Heart left ventricle (tissue), 16 donors: ENCODE measurements at regions of chr5 and their contacts with region 1.

Region 1: DNA sequence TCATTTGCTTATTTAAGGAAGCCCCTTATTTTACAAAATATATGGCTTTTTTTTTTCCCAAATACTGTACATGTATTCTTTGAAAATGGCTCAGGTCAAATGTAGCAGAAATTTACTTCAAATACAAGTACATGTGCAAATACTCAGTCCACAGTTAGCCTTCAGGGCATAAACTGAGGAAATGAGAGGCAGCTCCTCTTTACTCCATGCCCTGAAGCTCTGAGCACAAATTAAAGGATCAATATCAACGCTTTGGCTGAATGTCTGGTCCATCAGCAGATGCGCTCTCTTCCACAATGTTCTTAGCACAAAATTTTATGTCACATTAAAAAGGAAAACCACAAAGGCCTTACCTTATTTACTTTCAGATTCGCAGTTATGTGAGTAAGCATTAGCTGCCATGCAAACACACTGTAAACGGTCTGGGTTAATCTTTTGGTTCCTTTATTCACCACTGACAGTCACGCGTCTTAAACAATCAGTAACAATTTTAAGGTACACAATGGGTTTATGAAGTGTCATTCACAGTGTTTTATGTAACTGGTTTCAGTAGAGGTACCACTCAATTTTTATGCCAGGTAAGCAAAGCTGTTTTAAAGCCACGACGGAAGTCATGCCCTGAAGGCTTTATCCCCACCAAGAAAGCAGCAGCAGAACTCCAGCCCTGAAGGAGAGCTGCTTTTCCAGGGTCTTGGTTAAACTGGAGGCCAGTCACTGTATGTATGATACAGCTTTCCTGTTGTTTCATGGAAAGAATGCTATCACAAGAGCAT is 103.4 kb downstream of the OTULIN start:
- DNase-seq: no peak
- ATAC-seq: peak in 1 of 4 donors; percentile 28
- H3K4me3 ChIP-seq: no peak overlapping the region
- H3K27ac ChIP-seq: peak overlapping the region in 3 of 12 donors; percentile 6 to 39 (median 16)
- H3K4me1 ChIP-seq: peaks cover 0 to 25% (median 6%) of the 10 kb centered on the region in 12 donors
- H3K27me3 ChIP-seq: no peaks in the 10 kb centered on the region
- CTCF ChIP-seq: no peak
- POLR2A ChIP-seq: no peak

Region 2: DNA sequence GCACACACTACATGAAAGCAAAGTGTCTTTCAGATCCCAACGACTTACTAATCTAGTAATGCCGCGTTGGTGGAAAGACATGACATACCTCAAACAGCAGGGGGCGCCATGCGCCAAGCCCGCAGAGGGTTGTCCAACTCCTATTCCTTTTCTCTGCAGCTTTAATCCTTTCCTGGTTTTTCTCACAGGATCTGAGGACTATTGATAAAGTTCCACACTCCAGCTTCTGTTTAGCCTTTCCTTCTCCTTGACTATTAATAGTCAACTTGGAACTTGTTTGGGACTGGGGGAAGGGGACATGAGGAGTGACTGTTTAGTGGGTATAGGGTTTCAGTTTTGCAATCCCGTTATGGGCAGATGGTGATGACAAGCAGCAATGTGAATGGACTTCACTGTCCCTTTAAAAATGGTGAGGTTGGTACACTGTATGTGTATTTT is 40.5 kb before region 1 on chr5:
- intact Hi-C with region 1: no loop called
- DNase-seq: peak; percentile 79 to 90 (median 79)
- ATAC-seq: peak; percentile 60 to 78 (median 68)
- H3K4me3 ChIP-seq: no peak overlapping the region
- H3K27ac ChIP-seq: peak overlapping the region in 6 of 12 donors; percentile 8 to 65 (median 34)
- H3K4me1 ChIP-seq: peaks cover 0 to 41% (median 25%) of the 10 kb centered on the region in 12 donors
- H3K27me3 ChIP-seq: no peaks in the 10 kb centered on the region
- CTCF ChIP-seq: peak; percentile 90 to 99 (median 96)
- POLR2A ChIP-seq: no peak

Region 3: GRCh38 chr5:14801792-14802191 is 33.9 kb after region 1 on chr5:
- intact Hi-C with region 1: loop called in 1 of 10 experiments (anchors 5 kb)
- DNase-seq: no peak
- ATAC-seq: no peak
- H3K4me3 ChIP-seq: no peak overlapping the region
- H3K27ac ChIP-seq: no peak overlapping the region
- H3K4me1 ChIP-seq: peaks cover 3 to 33% (median 17%) of the 10 kb centered on the region in 12 donors
- H3K27me3 ChIP-seq: no peaks in the 10 kb centered on the region
- CTCF ChIP-seq: no peak
- POLR2A ChIP-seq: no peak

Region 4: DNA sequence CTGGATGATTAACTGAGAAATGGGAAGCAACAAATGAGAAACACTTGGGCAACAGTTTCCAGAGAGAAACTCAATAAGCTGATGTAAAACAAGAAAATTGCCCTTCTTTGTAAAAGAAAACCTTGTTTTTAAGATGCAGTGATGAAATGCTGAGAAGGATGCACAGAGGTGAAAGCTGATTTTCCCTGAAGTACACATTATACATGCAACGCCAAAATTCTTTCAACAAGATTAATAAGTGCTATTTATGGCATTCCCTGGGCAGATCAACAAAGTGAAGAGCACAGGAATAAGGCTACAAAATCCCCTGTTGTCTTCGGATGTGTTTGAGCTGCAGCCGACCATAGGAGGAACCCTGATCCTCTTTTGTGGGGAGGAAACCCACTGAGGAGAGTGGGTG is 311.6 kb after region 1 on chr5:
- intact Hi-C with region 1: no loop called
- DNase-seq: no peak
- ATAC-seq: no peak
- H3K4me3 ChIP-seq: no peak overlapping the region
- H3K27ac ChIP-seq: no peak overlapping the region
- H3K4me1 ChIP-seq: no peaks in the 10 kb centered on the region
- H3K27me3 ChIP-seq: no peaks in the 10 kb centered on the region
- CTCF ChIP-seq: no peak
- POLR2A ChIP-seq: no peak